Left cardiac atrium (tissue), 4 donors: ENCODE measurements at regions of chr15 and their contacts with region 1.

Region 1: GRCh38 chr15:23532019-23532418 is 33.5 kb upstream of the MKRN3 start:
- DNase-seq: no peak
- ATAC-seq: peak in 1 of 2 donors; percentile 31

Region 2: GRCh38 chr15:23595368-23595767 is 63.3 kb after region 1 on chr15:
- intact Hi-C with region 1: loop called in 1 of 2 experiments (anchors 10 kb)
- DNase-seq: no peak
- ATAC-seq: no peak